ENCODE measurements at regions of chr19 and their contacts with region 1.

Region 1: DNA sequence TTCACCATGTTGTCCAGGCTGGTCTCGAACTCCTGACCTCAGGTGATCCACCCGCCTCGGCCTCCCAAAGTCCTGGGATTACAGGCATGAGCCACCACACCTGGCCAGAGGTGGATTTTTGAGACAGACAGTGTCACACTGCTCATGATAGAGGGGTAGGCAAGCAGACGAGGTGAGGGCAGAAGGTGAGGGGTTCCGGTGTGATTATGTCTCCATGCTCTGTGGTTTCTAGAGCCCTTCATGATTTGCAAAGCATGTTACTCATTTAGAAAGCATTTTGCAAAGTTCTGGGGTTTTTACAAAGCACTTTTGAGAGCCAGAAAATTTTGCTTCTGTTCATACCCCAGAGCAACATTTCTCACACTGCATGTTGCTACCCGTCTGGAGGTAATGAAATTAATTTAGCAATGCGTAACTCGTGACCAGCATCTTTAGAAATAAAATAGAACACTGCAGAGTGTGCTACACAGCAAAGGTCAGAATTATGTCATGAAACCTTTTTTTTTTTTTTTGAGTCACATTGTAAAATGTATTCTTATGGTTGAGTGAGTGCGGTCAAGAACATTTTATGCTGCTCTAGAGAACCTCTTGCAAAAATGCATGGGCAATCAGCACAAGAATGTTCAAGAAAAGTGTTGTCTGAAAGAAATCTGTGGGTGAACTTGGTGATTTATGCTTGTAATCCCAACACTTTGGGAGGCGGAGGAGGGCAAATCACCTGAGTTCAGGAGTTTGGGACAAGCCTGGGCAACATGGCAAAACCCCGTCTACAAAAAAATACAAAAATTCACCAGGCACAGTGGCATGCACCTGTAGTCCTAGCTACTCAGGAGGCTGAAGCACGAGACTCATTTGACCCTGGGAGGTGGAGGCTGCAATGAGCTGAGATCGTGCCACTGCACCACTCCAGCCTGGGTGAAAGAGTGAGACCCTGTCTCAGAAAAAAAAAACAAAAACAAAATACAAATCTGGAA is 58.0 kb downstream of the MAP4K1 start:
- DNase-seq: no peak
- ATAC-seq: no peak
- H3K4me3 ChIP-seq: no peak overlapping the region
- H3K27ac ChIP-seq: no peak overlapping the region
- H3K4me1 ChIP-seq: 0 out of 2 replicates have a peak, but pooled peaks cover 2% of the 10 kb centered on the region
- H3K27me3 ChIP-seq: no peaks in the 10 kb centered on the region
- CTCF ChIP-seq: no peak

Region 2: DNA sequence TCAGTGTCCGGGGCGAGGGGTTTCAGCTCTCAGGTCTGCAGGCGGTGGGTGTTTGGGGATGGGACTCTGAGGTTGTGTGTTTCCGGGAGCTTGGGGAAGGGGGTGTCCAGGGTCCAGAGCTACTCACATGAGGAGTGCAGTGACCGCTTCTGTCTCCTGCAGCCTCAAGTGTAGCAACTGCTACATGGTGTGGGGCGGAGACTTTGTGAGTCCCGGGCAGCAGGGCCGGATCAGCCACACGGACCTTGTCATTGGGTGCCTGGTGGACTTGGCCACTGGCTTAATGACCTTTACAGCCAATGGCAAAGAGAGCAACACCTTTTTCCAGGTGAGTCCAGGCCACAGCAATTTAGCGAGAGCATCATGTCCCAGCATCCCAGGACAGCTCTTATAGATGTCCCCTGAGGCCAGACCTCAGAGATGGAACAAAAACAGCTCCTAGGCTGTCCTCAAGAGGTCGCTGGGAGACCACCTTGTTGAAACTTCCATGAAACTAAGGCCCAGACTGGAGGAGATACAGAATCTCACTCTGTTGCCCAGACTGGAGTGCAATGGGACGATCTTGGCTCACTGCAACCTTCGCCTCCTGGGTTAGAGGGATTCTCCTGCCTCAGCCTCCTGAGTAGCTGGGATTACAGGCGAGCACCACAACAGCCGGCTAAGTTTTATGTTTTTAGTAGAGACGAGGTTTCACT is 81.3 kb before region 1 on chr19:
- CTCF ChIA-PET with region 1: no interaction called
- POLR2A ChIA-PET with region 1: no interaction called
- in situ Hi-C with region 1: no loop called
- intact Hi-C with region 1: no loop called
- DNase-seq: no peak
- ATAC-seq: peak; percentile 91
- H3K4me3 ChIP-seq: no peak overlapping the region
- H3K27ac ChIP-seq: no peak overlapping the region
- H3K4me1 ChIP-seq: no peaks in the 10 kb centered on the region
- H3K27me3 ChIP-seq: no peaks in the 10 kb centered on the region
- CTCF ChIP-seq: no peak; the same call in 1 of the 2 replicates

Region 3: GRCh38 chr19:38640368-38640767 is 80.7 kb after region 1 on chr19:
- CTCF ChIA-PET with region 1: interaction called, 16 read pairs
- POLR2A ChIA-PET with region 1: no interaction called
- in situ Hi-C with region 1: no loop called
- intact Hi-C with region 1: no loop called
- DNase-seq: no peak
- ATAC-seq: peak; percentile 15
- H3K4me3 ChIP-seq: no peak overlapping the region
- H3K27ac ChIP-seq: no peak overlapping the region
- H3K4me1 ChIP-seq: peaks cover 8% of the 10 kb centered on the region
- H3K27me3 ChIP-seq: no peaks in the 10 kb centered on the region
- CTCF ChIP-seq: no peak

Measured in Panc1 (cell line).